Left colon (tissue), 2 donors: ENCODE measurements at regions of chr12 and their contacts with region 1.

Region 1: DNA sequence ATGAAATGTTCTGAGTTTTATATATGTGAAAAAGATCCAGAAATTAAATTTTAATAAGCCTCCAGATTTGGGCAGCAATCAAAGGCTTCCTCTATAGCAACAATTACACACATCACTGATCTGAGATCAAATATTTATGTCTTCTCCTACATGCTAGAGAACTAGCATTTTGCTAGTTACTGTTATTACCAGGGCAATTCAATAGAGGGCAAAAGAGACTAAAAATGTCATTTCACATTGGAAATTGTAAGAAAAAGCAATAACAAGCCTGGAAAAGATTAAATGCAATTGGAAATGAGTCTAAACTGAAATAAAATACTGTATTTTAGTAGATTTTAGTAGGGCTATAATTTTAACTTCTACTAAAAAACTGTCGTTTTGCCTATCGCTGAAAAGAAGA is 32.6 kb upstream of the ANO6 start:
- DNase-seq: no peak
- ATAC-seq: no peak

Region 2: GRCh38 chr12:45388545-45388944 is 205.3 kb after region 1 on chr12:
- intact Hi-C with region 1: loop called in 1 of 2 experiments (anchors 5 kb)
- DNase-seq: no peak
- ATAC-seq: peak; percentile 37